Prostate gland (tissue), 2 donors: ENCODE measurements at regions of chr2 and their contacts with region 1.

Region 1: DNA sequence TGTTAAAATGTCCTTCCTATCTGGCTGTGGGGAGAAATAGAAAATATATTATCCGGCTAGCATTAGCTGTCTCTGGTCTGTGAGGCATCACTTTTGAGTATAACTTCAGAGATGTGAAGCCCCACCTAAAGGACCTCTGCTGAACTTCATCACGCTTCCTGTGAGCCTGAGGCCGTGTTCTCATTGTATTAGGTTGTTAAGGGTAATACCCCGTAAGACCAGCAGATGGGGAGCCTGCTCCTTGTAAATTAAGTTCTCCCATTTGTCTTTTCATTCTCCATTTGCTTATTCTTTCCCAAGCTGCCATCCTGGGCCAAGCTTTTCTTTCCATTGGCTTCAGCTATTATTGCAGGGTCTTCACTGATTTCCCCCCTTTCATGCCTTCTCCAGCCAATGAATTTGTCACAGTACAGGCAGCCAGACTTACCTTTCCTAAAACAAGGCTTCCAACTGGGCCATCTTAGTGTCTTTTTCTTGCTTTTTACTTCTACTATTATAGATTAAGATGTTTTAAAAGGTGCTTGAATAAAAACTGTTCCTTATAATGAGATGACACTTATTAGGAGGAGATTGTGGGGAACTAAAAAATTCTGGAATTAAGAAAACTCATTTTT is 12.4 kb downstream of the NIF3L1 start:
- DNase-seq: peak; percentile 60
- H3K4me3 ChIP-seq: no peak overlapping the region
- H3K27ac ChIP-seq: no peak overlapping the region
- H3K4me1 ChIP-seq: no peaks in the 10 kb centered on the region
- H3K27me3 ChIP-seq: no peaks in the 10 kb centered on the region
- CTCF ChIP-seq: peak in 3 of 4 experiments; percentile 43 to 87 (median 73)
- POLR2A ChIP-seq: no peak

Region 2: GRCh38 chr2:201064797-201065329 is 163.3 kb after region 1 on chr2:
- intact Hi-C with region 1: loop called (anchors 5 kb)
- DNase-seq: no peak
- H3K4me3 ChIP-seq: no peak overlapping the region
- H3K27ac ChIP-seq: no peak overlapping the region
- H3K4me1 ChIP-seq: peaks cover 5% of the 10 kb centered on the region
- H3K27me3 ChIP-seq: no peaks in the 10 kb centered on the region
- CTCF ChIP-seq: no peak
- POLR2A ChIP-seq: no peak

Region 3: DNA sequence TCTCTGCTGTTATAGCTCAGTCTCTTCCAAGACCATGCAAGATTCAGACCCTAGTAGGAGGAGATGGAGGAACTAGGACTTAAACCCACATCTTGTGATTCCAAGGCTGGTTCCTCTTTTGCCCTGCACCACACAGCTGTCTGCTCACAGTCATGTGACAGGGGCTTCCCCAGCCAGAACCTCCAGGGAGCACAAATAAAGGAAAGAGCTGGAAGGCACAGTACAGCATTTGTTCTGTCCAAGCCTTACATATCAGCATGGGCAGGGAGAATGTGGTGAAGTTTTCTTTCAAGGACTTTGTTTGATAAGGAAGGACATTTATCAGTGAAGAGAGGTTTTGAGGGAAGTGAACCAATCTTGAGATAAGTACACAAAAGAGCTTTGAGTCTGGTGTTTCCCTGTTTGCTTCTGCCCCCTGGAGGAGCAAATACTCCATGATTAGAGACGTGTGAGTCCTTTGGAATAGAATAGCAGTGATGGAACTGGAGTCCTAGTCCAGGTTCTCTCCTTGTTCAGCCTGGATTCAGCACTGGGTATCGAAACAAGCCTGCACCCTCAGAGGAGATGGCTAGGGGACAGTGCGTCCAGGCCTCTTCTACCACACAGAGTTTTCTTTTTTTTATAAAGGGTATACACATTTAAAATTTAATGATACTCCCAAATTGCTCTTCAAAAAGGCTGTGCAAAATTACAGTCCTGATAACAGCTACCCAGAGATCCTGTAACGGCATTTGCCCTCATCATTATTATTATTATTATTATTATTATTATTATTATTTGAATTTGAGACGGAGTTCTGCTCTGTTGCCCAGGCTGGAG is 256.8 kb after region 1 on chr2:
- intact Hi-C with region 1: loop called (anchors 10 kb)
- DNase-seq: peak; percentile 61
- H3K4me3 ChIP-seq: no peak overlapping the region
- H3K27ac ChIP-seq: peak overlapping the region; percentile 10 to 45
- H3K4me1 ChIP-seq: no peaks in the 10 kb centered on the region
- H3K27me3 ChIP-seq: no peaks in the 10 kb centered on the region
- CTCF ChIP-seq: peak in 3 of 4 experiments; percentile 50 to 72 (median 57)
- POLR2A ChIP-seq: no peak

Region 4: DNA sequence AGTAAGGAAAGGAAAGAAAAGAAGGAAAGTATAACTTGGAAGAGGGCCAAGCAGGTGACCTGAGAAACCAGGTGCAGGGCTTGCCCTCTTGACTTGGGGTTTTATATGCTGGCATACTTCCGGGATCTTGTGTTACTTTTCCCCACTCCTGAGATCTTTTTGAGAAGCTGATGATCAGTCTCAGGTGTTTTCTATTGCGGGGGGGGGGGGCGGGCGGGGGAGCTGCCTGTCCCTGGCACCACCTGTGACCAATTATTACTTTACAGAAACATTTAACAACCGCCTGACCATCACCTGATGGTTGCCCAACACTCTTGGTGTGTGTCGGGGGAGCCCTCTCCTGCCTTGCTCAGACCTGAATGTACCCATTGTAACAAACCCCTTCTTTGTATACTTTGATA is 274.5 kb after region 1 on chr2:
- intact Hi-C with region 1: loop called (anchors 5 kb)
- DNase-seq: no peak
- H3K4me3 ChIP-seq: no peak overlapping the region
- H3K27ac ChIP-seq: no peak overlapping the region
- H3K4me1 ChIP-seq: no peaks in the 10 kb centered on the region
- H3K27me3 ChIP-seq: no peaks in the 10 kb centered on the region
- CTCF ChIP-seq: no peak
- POLR2A ChIP-seq: no peak